Dendritic cell treated with granulocyte-macrophage colony-stimulating factor and Interleukin-4, amounts not matched to agents 40 ng/mL and 50 ng/mL, for 4 days (primary cell): ENCODE measurements at regions of chr4 and their contacts with region 1.

Region 1: GRCh38 chr4:69881173-69881773 is 21.3 kb upstream of the SULT1E1 start:
- H3K4me3 Mint-ChIP-seq: no peak overlapping the region
- H3K27ac Mint-ChIP-seq: no peak overlapping the region
- H3K4me1 Mint-ChIP-seq: no peaks in the 10 kb centered on the region
- H3K27me3 Mint-ChIP-seq: no peaks in the 10 kb centered on the region

Region 2: GRCh38 chr4:69322055-69322454 is 559.2 kb before region 1 on chr4:
- intact Hi-C with region 1: loop called (anchors 5 kb)
- H3K4me3 Mint-ChIP-seq: no peak overlapping the region
- H3K27ac Mint-ChIP-seq: no peak overlapping the region
- H3K4me1 Mint-ChIP-seq: no peaks in the 10 kb centered on the region
- H3K27me3 Mint-ChIP-seq: no peaks in the 10 kb centered on the region

Region 3: DNA sequence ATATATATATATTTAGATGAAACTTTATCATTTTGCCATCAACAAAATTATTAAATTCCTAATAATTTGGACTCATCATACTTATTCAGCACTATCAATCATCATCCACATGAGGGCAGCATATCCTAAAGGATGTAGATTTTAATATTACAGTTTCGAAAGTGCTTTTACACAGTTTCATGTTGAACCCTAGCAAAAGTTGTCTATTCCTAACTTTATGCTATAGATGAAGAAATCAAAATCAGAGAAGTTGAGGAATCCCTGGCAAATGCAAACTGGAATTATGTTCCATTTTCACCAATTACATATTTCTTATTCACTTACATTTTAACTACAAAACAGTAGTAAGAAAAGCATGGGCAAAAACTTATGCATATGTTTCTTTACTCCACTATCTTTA is 191.7 kb before region 1 on chr4:
- intact Hi-C with region 1: loop called (anchors 1 kb)
- H3K4me3 Mint-ChIP-seq: no peak overlapping the region
- H3K27ac Mint-ChIP-seq: no peak overlapping the region
- H3K4me1 Mint-ChIP-seq: no peaks in the 10 kb centered on the region
- H3K27me3 Mint-ChIP-seq: peaks cover 4% of the 10 kb centered on the region

Region 4: DNA sequence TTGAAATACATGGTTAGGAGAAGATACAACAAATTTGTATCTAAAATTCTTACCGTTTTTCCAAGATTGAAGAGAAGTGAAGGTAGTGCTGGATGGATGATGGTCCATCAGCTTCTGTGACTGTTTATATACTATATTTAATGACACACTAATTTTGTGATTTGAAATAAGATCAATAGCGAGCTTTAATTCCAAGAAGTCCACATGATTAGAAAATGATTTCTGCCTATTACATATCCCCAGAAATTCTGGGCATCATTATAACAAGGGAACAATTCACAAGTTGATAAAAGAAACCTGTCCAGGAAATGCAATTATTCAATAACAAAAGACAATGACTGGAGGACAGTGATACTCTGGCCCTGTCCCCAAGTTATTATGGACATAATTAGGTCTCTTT is 84.4 kb after region 1 on chr4 and contains the start of gene CSN2:
- intact Hi-C with region 1: no loop called
- H3K4me3 Mint-ChIP-seq: no peak within 1 kb of the TSS
- H3K27ac Mint-ChIP-seq: no peak within 1 kb of the TSS
- H3K4me1 Mint-ChIP-seq: no peaks in the 10 kb centered on the region
- H3K27me3 Mint-ChIP-seq: no peaks in the 10 kb centered on the region

Region 5: DNA sequence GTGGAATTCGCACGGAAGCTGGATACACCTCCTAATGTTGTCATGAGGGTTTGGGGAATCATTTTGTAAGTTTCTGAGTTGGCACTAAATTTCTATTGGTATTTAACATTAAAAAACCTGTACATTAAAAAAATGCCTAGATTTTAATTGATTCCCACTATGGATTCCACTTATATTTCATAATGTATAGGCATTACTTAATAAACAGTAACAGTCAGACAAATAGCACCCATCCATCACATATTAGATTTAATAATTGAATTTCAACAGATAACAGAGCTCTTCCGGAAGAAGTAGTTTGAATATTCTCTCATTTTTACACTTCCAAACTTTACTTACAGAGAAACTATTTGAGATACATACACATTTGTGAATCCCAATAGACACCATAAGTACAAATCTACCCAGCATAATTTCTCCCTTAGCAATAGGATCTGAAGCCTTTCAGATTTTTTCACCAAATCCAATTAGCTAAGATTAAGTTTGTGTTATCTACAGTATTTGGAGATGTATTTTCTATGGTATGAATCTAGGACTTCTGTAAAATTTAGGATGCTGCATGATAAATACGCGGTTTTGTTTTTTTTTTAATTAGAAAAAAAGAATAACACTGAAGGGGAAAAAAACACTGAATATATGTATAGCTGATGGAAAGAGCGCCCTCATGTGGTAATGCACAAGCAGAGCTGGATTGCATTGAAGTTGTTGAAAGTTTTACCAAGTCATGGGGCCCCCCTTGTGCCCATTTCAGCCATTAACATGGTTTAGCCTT is 302.1 kb after region 1 on chr4:
- intact Hi-C with region 1: loop called (anchors 5 kb)
- H3K4me3 Mint-ChIP-seq: no peak overlapping the region
- H3K27ac Mint-ChIP-seq: no peak overlapping the region
- H3K4me1 Mint-ChIP-seq: no peaks in the 10 kb centered on the region
- H3K27me3 Mint-ChIP-seq: no peaks in the 10 kb centered on the region

Region 6: GRCh38 chr4:70505151-70505748 is 624.0 kb after region 1 on chr4:
- intact Hi-C with region 1: loop called (anchors 5 kb)
- H3K4me3 Mint-ChIP-seq: no peak overlapping the region
- H3K27ac Mint-ChIP-seq: no peak overlapping the region
- H3K4me1 Mint-ChIP-seq: no peaks in the 10 kb centered on the region
- H3K27me3 Mint-ChIP-seq: no peaks in the 10 kb centered on the region